ENCODE measurements at regions of chr10 and their contacts with region 1.

Region 1: DNA sequence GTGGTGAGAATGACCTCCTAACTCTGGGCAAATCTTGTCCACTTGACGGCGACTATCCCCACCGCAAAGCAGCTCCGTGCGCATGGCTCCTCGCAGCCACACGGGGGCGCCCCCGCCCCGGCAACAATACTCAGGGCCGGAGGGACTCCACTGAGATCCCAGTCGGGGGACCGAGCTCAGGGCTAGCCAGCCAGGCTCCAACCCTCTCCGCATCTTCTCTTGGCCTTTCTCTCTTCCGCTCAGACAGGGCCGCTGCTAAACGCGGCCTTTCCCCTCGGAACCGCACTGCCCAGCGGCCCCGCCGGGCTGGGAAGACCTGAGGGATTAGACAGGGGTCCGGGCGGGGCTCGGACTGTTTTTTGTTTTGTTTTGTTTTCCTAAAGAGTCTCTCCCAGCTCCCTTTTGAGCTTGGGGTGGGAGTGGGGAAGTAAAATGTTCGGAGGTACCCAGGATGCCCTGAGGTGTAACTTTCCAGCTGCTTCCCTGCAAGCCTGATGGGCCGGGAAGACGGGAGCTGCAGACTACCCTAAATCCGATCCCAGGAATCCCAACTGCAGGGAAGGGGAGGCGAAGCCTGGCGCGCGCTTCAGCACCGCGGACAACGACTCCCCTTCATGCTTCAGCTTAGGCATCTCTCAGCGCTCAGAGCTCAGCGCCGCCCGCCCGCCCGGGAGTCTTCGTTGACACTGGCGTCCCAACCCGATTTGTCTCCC is 2.7 kb downstream of the KCNIP2 start:
- DNase-seq: peak; percentile 75
- H3K4me3 Mint-ChIP-seq: peak overlapping the region; percentile 73
- H3K27ac Mint-ChIP-seq: no peak overlapping the region
- H3K4me1 Mint-ChIP-seq: peaks cover 50% of the 10 kb centered on the region
- H3K27me3 Mint-ChIP-seq: peaks cover 23% of the 10 kb centered on the region

Region 2: DNA sequence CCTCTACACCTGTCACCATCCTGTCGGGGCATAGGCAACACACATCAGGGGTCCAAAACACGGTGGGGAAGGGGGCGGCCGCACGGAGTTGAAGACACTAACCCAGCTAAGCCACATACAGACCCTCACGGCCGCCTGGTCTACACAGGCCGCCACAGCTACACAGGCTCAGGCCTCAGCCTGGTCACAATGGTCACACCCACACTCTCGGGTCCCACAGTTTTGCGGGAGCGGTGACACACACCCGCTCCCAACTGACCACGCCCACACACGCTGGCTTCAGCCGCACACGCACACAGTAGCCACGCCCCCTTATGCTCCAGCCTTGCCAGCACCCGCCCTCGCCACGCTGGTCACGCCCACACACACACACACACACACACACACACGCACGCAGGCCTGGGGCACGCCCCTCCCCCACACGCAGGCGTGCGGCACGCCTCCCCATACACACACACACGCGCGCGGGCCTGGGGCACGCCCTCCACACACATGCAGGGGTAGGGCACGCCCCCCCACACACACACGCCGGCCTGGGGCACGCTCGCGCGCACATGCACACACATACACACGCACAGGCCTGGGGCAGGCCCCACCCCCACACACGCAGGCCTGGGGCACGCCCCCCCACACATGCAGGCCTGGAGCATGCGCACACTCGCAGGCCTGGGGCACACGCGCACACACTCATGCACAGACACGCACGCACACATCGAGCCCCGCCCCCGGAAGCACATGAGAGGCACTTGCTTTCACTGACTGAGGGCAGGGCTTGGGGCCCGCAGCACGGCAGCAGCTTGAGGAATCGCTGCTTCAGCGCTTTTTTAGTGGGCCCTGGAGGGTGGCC is 10.4 kb before region 1 on chr10:
- CTCF ChIA-PET with region 1: interaction called, 31 read pairs
- POLR2A ChIA-PET with region 1: no interaction called
- DNase-seq: peak; percentile 95
- H3K4me3 Mint-ChIP-seq: peak overlapping the region; percentile 68
- H3K27ac Mint-ChIP-seq: peak overlapping the region; percentile 96
- H3K4me1 Mint-ChIP-seq: peaks cover 58% of the 10 kb centered on the region
- H3K27me3 Mint-ChIP-seq: no peaks in the 10 kb centered on the region

Region 3: DNA sequence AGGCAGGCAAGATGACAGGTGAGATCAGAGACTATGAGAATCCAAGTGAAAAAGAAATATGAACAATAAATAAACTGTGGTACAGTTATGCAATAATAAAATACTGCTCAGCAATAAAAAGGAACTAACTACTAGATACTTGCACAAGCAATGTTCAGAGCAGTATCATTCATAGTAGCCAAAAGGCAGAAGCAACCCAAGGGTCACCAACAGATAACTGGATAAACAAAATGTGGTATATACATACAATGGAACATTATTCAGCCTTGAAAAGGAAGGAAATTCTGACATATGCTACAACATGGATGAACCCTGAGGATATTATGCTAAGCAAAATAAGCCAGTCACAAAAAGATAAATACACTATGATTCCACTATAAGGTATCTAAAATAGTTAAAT is 79.6 kb after region 1 on chr10:
- CTCF ChIA-PET with region 1: no interaction called
- POLR2A ChIA-PET with region 1: no interaction called
- DNase-seq: no peak
- H3K4me3 Mint-ChIP-seq: no peak overlapping the region
- H3K27ac Mint-ChIP-seq: no peak overlapping the region
- H3K4me1 Mint-ChIP-seq: peaks cover 10% of the 10 kb centered on the region
- H3K27me3 Mint-ChIP-seq: no peaks in the 10 kb centered on the region

Region 4: DNA sequence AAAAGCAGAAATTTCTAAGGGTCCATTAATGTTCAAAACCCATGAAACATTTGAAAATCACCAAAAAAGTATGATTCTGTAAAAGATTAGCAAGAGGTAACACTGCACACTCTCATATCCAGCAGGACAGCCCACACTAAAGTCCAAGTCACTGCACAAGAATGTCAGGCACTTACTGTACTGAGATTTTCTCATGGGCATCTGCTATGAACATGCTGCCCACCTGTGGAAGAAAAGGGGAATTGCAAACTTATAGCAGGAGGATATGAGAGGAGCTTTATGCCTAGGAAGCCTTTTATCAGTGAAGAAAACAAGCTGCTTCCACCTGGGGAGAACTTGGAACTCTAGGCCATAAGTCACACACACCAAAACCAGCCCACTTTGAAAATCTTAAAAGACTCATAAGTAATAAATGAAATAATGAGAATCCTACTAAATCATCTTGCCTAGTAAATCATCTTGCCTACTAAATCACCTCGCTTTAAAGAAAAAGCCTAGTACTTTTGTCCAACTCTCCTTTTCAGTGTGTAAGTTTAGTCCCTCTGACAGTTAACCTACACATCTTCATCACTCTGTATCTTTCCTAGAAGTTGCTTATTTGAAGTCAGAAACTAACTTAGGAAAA is 169.0 kb after region 1 on chr10:
- CTCF ChIA-PET with region 1: interaction called, 47 read pairs
- POLR2A ChIA-PET with region 1: interaction called, 3 read pairs
- DNase-seq: peak; percentile 62
- H3K4me3 Mint-ChIP-seq: no peak overlapping the region
- H3K27ac Mint-ChIP-seq: no peak overlapping the region
- H3K4me1 Mint-ChIP-seq: no peaks in the 10 kb centered on the region
- H3K27me3 Mint-ChIP-seq: no peaks in the 10 kb centered on the region

Region 5: GRCh38 chr10:102055647-102056419 is 214.9 kb after region 1 on chr10 and contains the start of gene ARMH3:
- CTCF ChIA-PET with region 1: interaction called, 19 read pairs
- POLR2A ChIA-PET with region 1: interaction called, 4 read pairs
- DNase-seq: peak; percentile 95
- H3K4me3 Mint-ChIP-seq: peak within 1 kb of the TSS; percentile 98
- H3K27ac Mint-ChIP-seq: peak within 1 kb of the TSS; percentile 98
- H3K4me1 Mint-ChIP-seq: peaks cover 42% of the 10 kb centered on the region
- H3K27me3 Mint-ChIP-seq: no peaks in the 10 kb centered on the region
- total RNA-seq, gene ARMH3: 22.1 to 23.6 TPM